AG04450 (cell line): ENCODE measurements at regions of chr18 and their contacts with region 1.

Region 1: DNA sequence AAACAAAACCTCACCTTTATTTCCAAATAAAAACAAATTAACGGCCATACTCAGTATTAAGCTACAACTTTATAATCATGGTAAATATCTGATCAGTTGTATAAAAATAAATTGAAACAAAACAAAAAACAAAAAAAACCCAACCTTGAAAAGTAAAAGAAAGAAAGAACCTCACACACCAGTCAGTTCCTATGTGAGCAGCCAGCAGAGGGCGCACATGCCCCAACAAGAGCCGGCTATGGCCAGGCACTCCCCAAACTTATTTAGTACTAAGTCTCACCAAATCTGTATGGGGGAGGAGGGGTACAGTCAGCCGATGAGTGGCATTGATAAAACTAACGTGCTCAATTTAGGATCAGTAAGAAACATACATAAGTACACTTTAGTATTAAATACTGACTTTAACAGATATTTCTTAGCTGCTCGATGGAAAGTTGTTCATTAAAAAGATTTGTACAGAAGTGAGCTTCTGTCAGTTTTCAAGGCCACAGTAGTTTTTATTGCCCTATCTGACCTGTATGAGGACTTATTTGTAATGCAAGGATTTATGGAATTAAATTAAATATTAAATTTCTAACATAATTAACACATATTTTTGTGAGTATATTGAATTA is 172.6 kb downstream of the TCF4 start:
- DNase-seq: peak; percentile 48
- H3K4me3 ChIP-seq: no peak overlapping the region
- H3K27ac ChIP-seq: no peak overlapping the region
- H3K27me3 ChIP-seq: no peaks in the 10 kb centered on the region
- CTCF ChIP-seq: peak; percentile 90

Region 2: GRCh38 chr18:55322178-55322735 is 93.1 kb before region 1 on chr18:
- CTCF ChIA-PET with region 1: interaction called, 16 read pairs
- POLR2A ChIA-PET with region 1: no interaction called
- DNase-seq: peak; percentile 88
- H3K4me3 ChIP-seq: peak overlapping the region; percentile 68
- H3K27ac ChIP-seq: peak overlapping the region; percentile 88
- H3K27me3 ChIP-seq: no peaks in the 10 kb centered on the region
- CTCF ChIP-seq: 0 out of 2 replicates have a peak, but pooled peaks have one; percentile 9

Region 3: DNA sequence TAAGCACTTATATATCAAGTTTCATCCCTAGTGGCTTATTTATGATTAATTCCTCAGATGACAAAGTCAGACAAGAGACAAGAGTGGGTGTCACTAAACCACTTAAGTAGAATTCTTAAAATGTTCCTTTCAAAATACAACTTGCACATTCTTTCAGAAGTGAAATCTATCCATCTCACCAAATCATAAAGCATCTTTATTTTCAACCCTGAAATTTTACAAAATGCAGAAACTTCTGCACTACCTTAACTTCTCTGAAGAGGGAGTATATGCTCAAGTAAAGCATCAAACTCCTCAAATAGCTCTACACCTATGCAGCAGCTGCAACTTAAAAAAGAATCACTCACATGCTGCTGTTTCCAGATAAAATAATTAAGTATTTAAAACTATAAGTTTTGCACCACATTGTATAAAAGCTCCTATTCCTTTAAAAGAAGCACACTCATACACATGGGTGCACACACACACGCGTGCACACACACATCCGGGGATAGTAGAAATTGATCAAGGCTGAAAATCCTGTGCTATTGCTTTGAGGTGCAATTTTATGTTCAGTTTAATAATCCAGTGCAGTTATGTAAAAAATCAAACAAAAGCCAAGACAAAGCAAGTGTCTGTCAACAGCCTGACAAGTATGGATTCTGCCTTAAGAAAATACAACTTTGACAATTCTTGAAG is 71.8 kb before region 1 on chr18:
- CTCF ChIA-PET with region 1: interaction called, 18 read pairs
- POLR2A ChIA-PET with region 1: no interaction called
- DNase-seq: no peak
- H3K4me3 ChIP-seq: no peak overlapping the region
- H3K27ac ChIP-seq: no peak overlapping the region
- H3K27me3 ChIP-seq: no peaks in the 10 kb centered on the region
- CTCF ChIP-seq: peak; percentile 78

Region 4: GRCh38 chr18:55427951-55428350 is 12.6 kb after region 1 on chr18:
- CTCF ChIA-PET with region 1: interaction called, 36 read pairs
- POLR2A ChIA-PET with region 1: no interaction called
- DNase-seq: no peak
- H3K4me3 ChIP-seq: no peak overlapping the region
- H3K27ac ChIP-seq: no peak overlapping the region
- H3K27me3 ChIP-seq: no peaks in the 10 kb centered on the region
- CTCF ChIP-seq: no peak

Region 5: GRCh38 chr18:55582325-55582724 is 167.0 kb after region 1 on chr18:
- CTCF ChIA-PET with region 1: interaction called, 12 read pairs
- POLR2A ChIA-PET with region 1: no interaction called
- DNase-seq: no peak
- H3K4me3 ChIP-seq: no peak overlapping the region
- H3K27ac ChIP-seq: no peak overlapping the region
- H3K27me3 ChIP-seq: no peaks in the 10 kb centered on the region
- CTCF ChIP-seq: no peak

Region 6: GRCh38 chr18:55781481-55781957 is 366.2 kb after region 1 on chr18:
- CTCF ChIA-PET with region 1: interaction called, 12 read pairs
- POLR2A ChIA-PET with region 1: no interaction called
- DNase-seq: no peak
- H3K4me3 ChIP-seq: no peak overlapping the region
- H3K27ac ChIP-seq: no peak overlapping the region
- H3K27me3 ChIP-seq: no peaks in the 10 kb centered on the region
- CTCF ChIP-seq: peak; percentile 82

Region 7: GRCh38 chr18:56575819-56576663 is 1160.7 kb after region 1 on chr18:
- CTCF ChIA-PET with region 1: interaction called, 22 read pairs
- POLR2A ChIA-PET with region 1: no interaction called
- DNase-seq: peak; percentile 34
- H3K4me3 ChIP-seq: no peak overlapping the region
- H3K27ac ChIP-seq: no peak overlapping the region
- H3K27me3 ChIP-seq: no peaks in the 10 kb centered on the region
- CTCF ChIP-seq: peak; percentile 70